Activated CD8-positive, alpha-beta memory T cell treated with anti-CD3 and anti-CD28 coated beads, Interleukin-2, amount 10 ng/mL, durations not matched to agents 7 days and 5 days (primary cell): ENCODE measurements at regions of chr6 and their contacts with region 1.

Region 1: DNA sequence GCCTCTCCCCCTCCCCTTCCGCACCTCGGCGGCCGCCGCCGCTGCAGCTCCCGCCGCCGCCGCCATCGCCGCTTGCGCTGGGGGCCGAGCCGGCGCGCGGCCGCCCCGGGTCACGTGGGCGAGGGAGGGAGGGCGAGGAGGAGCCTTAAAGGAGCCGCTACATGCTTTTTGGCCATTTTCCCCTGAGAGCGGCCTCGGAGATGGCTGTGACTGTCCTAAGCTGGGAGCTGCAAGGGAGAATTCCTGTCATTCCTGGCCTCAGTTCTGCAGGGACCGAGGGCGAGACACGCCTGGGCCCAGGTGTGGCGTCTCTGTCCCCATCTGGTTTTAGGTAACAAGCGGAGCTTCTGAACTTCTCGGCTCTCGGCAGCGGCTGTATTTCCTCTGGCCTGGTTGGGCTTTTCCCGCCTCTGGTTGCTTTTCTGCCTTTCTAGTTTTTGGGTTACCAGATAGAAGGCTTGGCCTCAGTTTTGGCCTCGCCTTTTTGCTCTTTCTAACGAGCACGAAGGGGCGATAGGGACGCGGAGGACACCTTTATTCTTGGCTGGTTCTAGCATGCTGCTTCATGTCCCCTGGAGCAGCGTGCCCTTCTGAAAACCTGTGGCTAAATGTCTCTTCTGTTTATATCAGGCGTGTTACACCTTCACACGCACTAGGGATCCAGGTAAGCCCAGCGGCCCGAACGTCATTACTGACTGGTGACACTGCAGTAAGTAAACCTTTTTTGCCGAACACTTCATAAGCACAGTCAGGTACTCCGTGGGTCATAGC is at the start of gene EHMT2:
- DNase-seq: peak; percentile 91
- ATAC-seq: peak; percentile 78
- H3K4me3 Mint-ChIP-seq: peak within 1 kb of the TSS; percentile 93
- H3K27ac Mint-ChIP-seq: peak within 1 kb of the TSS; percentile 95
- H3K4me1 Mint-ChIP-seq: peaks cover 51% of the 10 kb centered on the region
- H3K27me3 Mint-ChIP-seq: peaks cover 4% of the 10 kb centered on the region
- total RNA-seq, gene EHMT2: 78.7 to 79.0 TPM

Region 2: GRCh38 chr6:31862344-31863227 is 35.2 kb before region 1 on chr6 and contains the start of gene NEU1:
- CTCF ChIA-PET with region 1: interaction called, 10 read pairs
- DNase-seq: peak; percentile 100
- ATAC-seq: peak; percentile 92
- H3K4me3 Mint-ChIP-seq: peak within 1 kb of the TSS; percentile 93
- H3K27ac Mint-ChIP-seq: peak within 1 kb of the TSS; percentile 90
- H3K4me1 Mint-ChIP-seq: peaks cover 22% of the 10 kb centered on the region
- H3K27me3 Mint-ChIP-seq: no peaks in the 10 kb centered on the region
- total RNA-seq, gene NEU1: 13.0 to 21.5 TPM